ENCODE measurements at regions of chr1 and their contacts with region 1.

Region 1: DNA sequence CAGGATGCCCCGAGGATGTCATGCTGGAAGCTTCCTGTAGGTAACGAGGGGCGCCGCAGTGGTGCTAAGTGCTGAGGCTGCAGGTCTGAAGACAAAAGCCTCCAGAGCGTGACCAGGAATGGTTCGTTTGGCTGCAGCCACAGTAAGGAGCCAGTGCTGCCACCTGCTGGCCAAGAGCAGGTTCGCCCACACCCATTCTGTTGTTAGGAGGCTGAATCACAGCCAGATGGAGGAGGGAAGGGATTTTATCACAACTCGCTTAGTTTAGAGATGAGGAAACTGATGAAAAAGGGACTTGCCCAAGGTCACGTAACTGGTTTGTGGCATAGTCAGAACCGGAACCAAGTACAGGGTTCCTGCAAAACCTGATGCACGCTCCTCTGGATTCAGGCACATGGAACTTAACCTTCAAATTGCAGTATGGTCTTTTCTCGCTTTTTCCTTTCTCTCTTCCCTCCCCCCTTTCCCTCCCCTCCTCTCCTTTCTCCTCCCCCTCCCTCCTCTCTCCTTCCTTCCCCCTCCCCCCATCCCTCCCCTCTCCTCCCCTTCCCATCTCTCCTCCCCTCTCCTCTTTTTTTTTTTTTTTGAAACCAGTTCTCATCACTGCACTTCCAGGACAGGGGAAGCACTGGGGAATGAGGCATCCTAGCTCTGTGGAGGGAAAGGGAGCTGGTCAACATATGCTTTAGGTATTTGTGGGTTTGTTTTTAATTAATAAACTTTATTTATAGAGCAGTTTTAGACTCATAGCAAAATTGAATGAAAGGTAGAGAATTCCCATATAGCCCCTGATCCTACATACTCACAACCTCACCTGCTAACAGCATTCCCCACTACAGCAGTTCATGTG is 81.8 kb downstream of the MPZL1 start:
- DNase-seq: peak; percentile 92 to 95
- ATAC-seq: peak; percentile 97 to 99 (median 98)
- H3K4me3 ChIP-seq: peak overlapping the region; percentile 29
- H3K27ac ChIP-seq: no peak overlapping the region
- H3K4me1 ChIP-seq: peaks cover 3% of the 10 kb centered on the region
- H3K27me3 ChIP-seq: no peaks in the 10 kb centered on the region
- CTCF ChIP-seq: peak; percentile 96

Region 2: GRCh38 chr1:167599957-167600581 is 203.5 kb before region 1 on chr1:
- intact Hi-C with region 1: loop called (anchors 10 kb)
- DNase-seq: peak; percentile 31 to 59
- ATAC-seq: peak; percentile 85 to 94 (median 90)
- H3K4me3 ChIP-seq: no peak overlapping the region
- H3K27ac ChIP-seq: peak overlapping the region; percentile 51
- H3K4me1 ChIP-seq: peaks cover 24% of the 10 kb centered on the region
- H3K27me3 ChIP-seq: no peaks in the 10 kb centered on the region
- CTCF ChIP-seq: peak; percentile 62

Region 3: DNA sequence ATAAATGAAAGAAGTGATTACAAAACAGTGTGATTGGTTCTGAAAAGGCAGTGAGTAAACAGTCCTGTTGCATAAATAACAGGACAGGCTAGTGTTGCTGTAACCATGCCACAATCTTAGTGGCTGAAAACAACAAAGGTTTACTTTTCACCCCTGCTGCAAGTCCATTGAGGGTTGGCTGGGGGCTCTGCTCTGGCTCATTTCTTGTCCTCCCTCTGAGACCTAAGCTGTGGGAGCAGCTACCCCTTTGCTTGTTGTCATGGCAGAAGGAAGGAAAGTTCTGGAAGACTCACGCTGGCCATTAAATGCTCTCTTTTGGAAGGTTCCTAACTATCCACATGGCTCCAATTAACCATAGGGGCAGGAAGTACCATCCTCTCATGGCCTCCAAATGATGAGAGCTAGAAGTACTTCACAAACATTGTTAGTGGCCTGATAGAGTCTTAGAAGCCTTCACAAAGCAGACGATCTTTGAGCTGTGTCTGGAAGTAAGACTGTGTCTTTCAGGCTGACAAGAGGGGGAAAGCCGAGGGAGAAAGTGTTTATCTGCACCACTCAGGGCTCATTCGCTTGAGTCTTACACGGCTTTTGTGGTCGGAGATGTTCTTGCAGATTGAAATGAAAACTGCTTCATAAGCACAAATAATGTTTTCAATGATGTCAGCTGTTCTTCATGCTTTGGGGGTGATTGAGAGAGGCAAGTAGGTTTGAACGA is 161.6 kb before region 1 on chr1:
- intact Hi-C with region 1: no loop called
- DNase-seq: no peak
- ATAC-seq: no peak
- H3K4me3 ChIP-seq: no peak overlapping the region
- H3K27ac ChIP-seq: no peak overlapping the region
- H3K4me1 ChIP-seq: peaks cover 32% of the 10 kb centered on the region
- H3K27me3 ChIP-seq: no peaks in the 10 kb centered on the region
- CTCF ChIP-seq: no peak

Region 4: DNA sequence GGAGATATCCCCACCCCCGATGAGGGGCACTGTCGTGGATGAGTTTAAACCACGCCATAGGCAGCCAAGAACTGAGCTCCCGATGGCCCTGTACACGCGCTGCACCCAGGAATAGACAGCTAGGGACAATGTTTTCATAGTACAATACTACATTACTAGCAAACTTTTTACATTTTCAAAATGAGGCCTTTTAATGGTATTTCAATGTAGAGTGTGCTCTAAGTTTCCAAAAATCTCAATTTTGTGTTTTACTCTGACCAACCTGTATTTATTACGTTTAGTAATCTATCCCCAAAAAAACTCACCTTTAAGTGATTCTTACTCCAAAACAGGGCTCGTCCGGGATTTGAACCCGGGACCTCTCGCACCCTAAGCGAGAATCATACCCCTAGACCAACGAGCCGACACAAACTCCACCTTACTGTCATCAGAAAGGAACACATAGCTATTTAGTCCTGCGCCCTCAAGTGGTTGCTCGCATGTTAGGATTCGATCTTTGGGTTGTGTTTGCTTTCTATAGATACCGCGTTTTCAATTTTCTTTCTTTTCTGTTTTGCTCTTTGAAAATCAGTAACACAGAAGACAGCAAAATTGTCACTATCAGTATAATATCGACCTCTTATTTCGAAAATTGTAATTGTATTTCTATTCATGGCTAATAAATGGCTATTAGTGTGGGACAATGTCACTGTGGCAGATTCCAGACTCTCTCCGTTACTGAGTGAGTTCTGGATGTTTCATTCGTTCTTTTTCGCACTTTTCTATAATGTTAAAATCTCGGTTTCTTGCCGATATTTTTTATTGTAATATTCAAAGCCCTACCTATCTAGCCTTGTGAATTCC is 88.2 kb before region 1 on chr1:
- intact Hi-C with region 1: loop called (anchors 2 to 5 kb)
- DNase-seq: peak; percentile 72 to 85
- ATAC-seq: peak; percentile 62 to 81 (median 70)
- H3K4me3 ChIP-seq: peak overlapping the region; percentile 82
- H3K27ac ChIP-seq: peak overlapping the region; percentile 97
- H3K4me1 ChIP-seq: no peaks in the 10 kb centered on the region
- H3K27me3 ChIP-seq: no peaks in the 10 kb centered on the region
- CTCF ChIP-seq: peak; percentile 80